HCT116 (cell line): ENCODE measurements at regions of chr18 and their contacts with region 1.

Region 1: GRCh38 chr18:80034068-80034851 is at the start of gene RBFA:
- DNase-seq: peak; percentile 94
- ATAC-seq: peak; percentile 87
- H3K4me3 ChIP-seq: peak within 1 kb of the TSS; percentile 72 to 89
- H3K27ac ChIP-seq: peak within 1 kb of the TSS; percentile 72
- H3K4me1 ChIP-seq: peaks cover 8 to 17% of the 10 kb centered on the region in 2 experiments; a peak in 3 of 4 replicates
- H3K27me3 ChIP-seq: no peaks in the 10 kb centered on the region
- CTCF ChIP-seq: peak in 2 of 3 experiments; percentile 45 to 53; a peak in 4 of 6 replicates
- POLR2A ChIP-seq: peak; percentile 86
- RAD21 ChIP-seq: peak; percentile 31; the same call in 1 of the 2 replicates
- total RNA-seq, gene RBFA: 45.3 TPM

Region 2: DNA sequence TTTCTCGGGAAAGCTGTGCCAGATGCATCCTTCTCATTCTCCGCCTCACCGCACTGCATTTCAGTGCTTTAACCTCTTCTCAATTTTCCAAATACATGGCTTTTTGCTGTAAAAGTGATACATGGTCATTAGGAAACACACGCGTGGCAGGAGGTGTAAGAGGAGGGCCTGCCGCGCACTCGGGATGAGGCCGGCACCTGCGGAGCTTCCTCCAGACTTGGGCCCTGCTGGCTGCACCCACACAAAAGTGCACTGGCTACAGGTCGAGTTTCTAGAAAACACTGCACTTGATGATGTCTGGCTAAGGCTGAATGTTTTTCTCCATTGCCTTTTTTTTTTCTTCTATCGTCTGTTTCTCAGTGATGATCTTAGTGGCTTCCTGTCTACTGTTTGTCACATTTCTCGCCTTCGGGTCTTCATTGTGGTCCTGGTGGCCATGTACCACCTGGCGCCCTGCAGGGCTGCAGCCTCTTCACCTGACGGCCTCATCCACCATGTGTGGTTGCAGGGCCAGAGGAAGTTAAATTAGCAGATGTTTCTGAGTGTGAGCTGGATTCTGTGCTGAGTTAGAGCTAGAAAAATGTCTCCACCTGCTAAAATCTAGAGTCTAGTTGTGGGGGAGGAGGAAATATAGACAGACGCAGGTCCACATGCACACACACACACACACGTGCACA is 228.9 kb before region 1 on chr18:
- CTCF ChIA-PET with region 1: no interaction called
- POLR2A ChIA-PET with region 1: no interaction called
- RAD21 ChIA-PET with region 1: no interaction called
- intact Hi-C with region 1: no loop called
- DNase-seq: no peak
- ATAC-seq: no peak
- H3K4me3 ChIP-seq: no peak overlapping the region
- H3K27ac ChIP-seq: no peak overlapping the region
- H3K4me1 ChIP-seq: no peaks in the 10 kb centered on the region
- H3K27me3 ChIP-seq: no peaks in the 10 kb centered on the region
- CTCF ChIP-seq: no peak
- POLR2A ChIP-seq: no peak
- RAD21 ChIP-seq: no peak

Region 3: DNA sequence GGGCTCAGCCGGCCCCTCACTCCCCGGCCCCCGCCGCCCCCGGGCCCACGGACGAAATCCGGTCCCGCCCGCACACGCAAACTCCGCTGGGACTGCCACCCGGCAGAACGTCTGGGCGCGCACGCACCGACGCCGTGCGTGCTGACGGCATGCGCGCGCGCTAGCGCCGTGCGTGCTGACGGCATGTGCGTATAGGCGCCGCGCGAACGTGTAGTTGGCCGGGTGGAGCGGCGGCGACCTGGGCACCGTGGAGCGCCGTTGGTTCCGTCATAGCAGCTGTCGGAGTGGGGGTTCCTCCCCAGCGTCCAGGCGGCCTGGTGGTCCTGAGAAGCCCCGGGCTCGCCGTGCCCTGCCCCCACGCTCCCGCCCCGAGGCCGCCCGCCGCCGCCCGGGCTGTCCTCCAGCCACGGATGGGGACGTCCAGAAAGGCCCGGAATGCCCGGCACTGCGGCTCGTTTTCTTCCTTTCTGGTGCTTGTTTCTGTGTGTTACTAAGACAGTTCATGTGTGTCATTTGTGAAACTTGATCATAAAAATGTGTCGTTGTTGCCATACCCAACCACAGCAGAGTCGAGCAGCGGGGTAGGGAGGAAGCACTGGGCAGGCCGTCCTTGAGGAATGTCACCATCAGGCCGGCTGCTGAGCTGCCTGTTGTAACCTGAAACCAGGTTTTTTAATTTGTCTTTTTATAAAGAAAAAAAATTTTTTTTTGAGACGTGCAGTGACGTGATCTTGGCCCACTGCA is 45.6 kb before region 1 on chr18 and contains the start of gene TXNL4A:
- CTCF ChIA-PET with region 1: no interaction called
- POLR2A ChIA-PET with region 1: interaction called, 16 read pairs
- RAD21 ChIA-PET with region 1: interaction called, 3 read pairs
- intact Hi-C with region 1: loop called (anchors 1 kb)
- DNase-seq: no peak
- ATAC-seq: peak; percentile 96
- H3K4me3 ChIP-seq: peak within 1 kb of the TSS; percentile 59 to 83
- H3K27ac ChIP-seq: peak within 1 kb of the TSS; percentile 97
- H3K4me1 ChIP-seq: peaks cover 8 to 23% of the 10 kb centered on the region in 2 experiments
- H3K27me3 ChIP-seq: no peaks in the 10 kb centered on the region
- CTCF ChIP-seq: no peak
- POLR2A ChIP-seq: peak; percentile 89
- RAD21 ChIP-seq: no peak
- total RNA-seq, gene TXNL4A: 178 TPM

Region 4: DNA sequence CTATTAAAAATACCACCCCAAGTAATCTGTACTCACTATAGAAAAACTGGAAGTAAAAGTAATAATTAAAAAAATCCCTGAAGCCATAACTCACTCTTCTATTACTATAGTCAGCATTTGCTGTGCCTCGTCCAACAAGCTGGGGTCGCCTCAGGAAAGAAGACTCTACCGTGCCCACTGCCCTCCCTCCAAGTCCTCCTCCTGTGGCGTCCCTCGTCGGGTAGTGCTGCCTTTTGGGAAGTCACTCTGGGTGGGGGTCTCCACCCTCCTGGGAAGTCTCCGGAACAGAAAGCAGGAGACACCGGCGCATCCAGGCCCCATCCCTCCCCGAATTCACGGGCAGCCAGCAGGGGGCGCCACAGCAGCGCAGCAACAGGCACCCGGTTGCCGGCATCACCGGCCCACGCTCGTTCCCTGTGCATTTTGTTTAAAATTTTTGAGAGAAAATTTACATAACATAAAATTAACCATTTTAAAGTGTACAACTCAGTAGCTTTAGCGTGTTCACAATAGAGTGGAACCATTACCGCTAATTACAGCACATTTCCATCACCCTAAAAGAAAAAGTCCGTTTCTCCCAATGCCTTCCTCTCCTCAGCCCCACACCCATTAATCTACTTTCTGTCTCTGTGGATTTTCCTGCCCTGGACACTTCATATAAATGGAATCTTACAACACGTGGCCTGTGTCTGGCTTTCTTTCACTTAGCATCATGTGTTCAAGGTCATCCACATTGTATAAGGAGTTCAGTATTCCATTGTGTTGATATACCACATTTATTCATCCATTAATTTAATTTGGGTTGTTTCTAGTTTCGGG is 137.0 kb after region 1 on chr18:
- CTCF ChIA-PET with region 1: no interaction called
- POLR2A ChIA-PET with region 1: no interaction called
- RAD21 ChIA-PET with region 1: no interaction called
- intact Hi-C with region 1: no loop called
- DNase-seq: no peak
- ATAC-seq: peak; percentile 89
- H3K4me3 ChIP-seq: no peak overlapping the region
- H3K27ac ChIP-seq: no peak overlapping the region
- H3K4me1 ChIP-seq: no peaks in the 10 kb centered on the region
- H3K27me3 ChIP-seq: no peaks in the 10 kb centered on the region
- CTCF ChIP-seq: peak; percentile 72 to 96 (median 94)
- POLR2A ChIP-seq: no peak
- RAD21 ChIP-seq: peak; percentile 81

Region 5: GRCh38 chr18:80229363-80230127 is 195.3 kb after region 1 on chr18:
- CTCF ChIA-PET with region 1: no interaction called
- POLR2A ChIA-PET with region 1: no interaction called
- RAD21 ChIA-PET with region 1: no interaction called
- intact Hi-C with region 1: no loop called
- DNase-seq: no peak
- ATAC-seq: no peak
- H3K4me3 ChIP-seq: no peak overlapping the region
- H3K27ac ChIP-seq: no peak overlapping the region
- H3K4me1 ChIP-seq: no peaks in the 10 kb centered on the region
- H3K27me3 ChIP-seq: no peaks in the 10 kb centered on the region
- CTCF ChIP-seq: no peak
- POLR2A ChIP-seq: no peak
- RAD21 ChIP-seq: no peak